Activated naive CD4-positive, alpha-beta T cell treated with anti-CD3 and anti-CD28 coated beads, Interleukin-2, amount 10 ng/mL, durations not matched to agents 7 days and 5 days (primary cell): ENCODE measurements at regions of chr20 and their contacts with region 1.

Region 1: GRCh38 chr20:57383447-57384347 is 7.5 kb upstream of the RBM38 start:
- DNase-seq: peak; percentile 17
- H3K4me3 Mint-ChIP-seq: no peak overlapping the region
- H3K27ac Mint-ChIP-seq: no peak overlapping the region
- H3K4me1 Mint-ChIP-seq: peaks cover 25% of the 10 kb centered on the region
- H3K27me3 Mint-ChIP-seq: no peaks in the 10 kb centered on the region

Region 2: GRCh38 chr20:57398231-57398821 is 14.6 kb after region 1 on chr20:
- CTCF ChIA-PET with region 1: interaction called, 17 read pairs
- DNase-seq: peak; percentile 95
- H3K4me3 Mint-ChIP-seq: peak overlapping the region; percentile 77
- H3K27ac Mint-ChIP-seq: peak overlapping the region; percentile 97
- H3K4me1 Mint-ChIP-seq: peaks cover 95% of the 10 kb centered on the region
- H3K27me3 Mint-ChIP-seq: no peaks in the 10 kb centered on the region

Region 3: DNA sequence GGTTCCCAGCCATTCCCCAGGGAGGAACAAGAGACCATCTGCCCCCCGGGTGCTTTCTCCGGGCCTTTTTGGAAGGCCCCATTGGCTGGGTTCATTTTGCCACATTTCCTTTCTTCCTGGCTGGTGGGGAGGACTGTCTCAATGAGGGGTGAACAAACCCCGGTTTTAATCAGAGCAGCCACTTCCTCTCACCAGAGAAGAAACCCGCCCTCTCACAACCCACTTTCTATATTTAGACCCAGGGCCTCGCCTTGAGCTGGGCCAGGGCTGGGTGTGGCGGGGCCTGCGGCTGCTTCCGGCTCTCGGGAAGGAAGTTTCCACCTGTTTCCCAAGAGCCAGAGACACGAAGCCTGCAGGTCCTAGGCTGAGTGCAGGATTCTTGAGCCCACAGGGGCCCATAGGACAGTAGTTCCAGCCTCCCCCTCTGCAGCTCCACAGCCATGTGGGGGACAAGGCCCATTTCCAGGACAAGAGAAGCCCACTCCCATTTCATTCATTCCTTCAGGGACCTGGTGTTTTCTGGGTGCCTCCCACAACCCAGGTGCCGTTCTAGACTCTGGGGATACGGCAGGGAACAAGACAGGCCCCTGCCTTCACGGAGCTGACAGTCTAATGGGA is 49.3 kb after region 1 on chr20:
- CTCF ChIA-PET with region 1: interaction called, 24 read pairs
- DNase-seq: peak; percentile 88
- H3K4me3 Mint-ChIP-seq: peak overlapping the region; percentile 53
- H3K27ac Mint-ChIP-seq: peak overlapping the region; percentile 96
- H3K4me1 Mint-ChIP-seq: peaks cover 74% of the 10 kb centered on the region
- H3K27me3 Mint-ChIP-seq: peaks cover 13% of the 10 kb centered on the region

Region 4: DNA sequence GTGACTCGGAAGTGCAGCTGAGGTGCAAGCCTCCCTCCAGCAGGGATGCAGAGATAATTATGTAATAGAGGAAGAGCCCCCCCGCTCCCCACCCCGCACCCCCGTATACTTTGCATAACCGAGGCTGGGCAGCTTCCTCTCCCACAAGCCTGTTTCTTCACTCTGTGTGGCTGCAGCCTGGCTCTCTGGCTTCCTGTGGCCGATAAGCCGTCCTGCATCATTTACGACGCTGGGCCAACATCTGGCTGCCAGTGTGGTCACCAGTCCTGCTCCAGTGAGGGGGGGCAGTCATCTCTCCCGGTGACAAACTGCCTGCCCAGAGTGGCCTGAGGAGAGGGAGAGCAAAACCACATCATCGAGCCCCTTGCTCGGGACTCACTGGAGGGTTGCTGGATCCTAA is 66.7 kb after region 1 on chr20:
- CTCF ChIA-PET with region 1: no interaction called
- DNase-seq: peak; percentile 46
- H3K4me3 Mint-ChIP-seq: no peak overlapping the region
- H3K27ac Mint-ChIP-seq: no peak overlapping the region
- H3K4me1 Mint-ChIP-seq: peaks cover 35% of the 10 kb centered on the region
- H3K27me3 Mint-ChIP-seq: peaks cover 71% of the 10 kb centered on the region

Region 5: DNA sequence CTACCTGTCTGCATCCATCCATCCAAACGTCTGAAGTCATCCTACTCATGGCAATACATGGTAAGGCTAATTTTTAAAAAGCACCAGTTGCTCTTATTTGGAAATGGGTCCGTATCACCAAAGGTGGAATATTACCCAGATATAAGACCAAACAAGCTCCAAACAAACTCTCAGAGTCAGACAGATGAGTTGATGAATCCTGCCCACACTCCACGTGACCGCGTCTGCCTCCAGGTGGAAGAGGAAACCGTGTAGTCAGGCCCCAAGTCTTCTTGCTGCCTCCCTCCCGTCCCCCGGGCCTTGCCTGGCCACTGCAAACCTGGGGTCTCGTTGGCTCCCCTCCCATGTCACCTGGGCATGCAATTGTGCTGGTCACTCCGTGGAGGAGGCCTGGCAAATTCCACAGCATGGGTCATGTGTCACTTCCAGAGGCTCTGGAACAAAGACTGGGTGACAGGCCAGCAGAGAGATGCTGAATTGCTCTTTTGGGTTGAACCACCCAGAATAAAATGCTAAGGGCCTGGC is 109.5 kb after region 1 on chr20:
- CTCF ChIA-PET with region 1: interaction called, 25 read pairs
- DNase-seq: no peak
- H3K4me3 Mint-ChIP-seq: no peak overlapping the region
- H3K27ac Mint-ChIP-seq: no peak overlapping the region
- H3K4me1 Mint-ChIP-seq: peaks cover 12% of the 10 kb centered on the region
- H3K27me3 Mint-ChIP-seq: peaks cover 43% of the 10 kb centered on the region

Region 6: GRCh38 chr20:57498425-57499400 is 115.0 kb after region 1 on chr20:
- CTCF ChIA-PET with region 1: interaction called, 25 read pairs
- DNase-seq: peak; percentile 58
- H3K4me3 Mint-ChIP-seq: no peak overlapping the region
- H3K27ac Mint-ChIP-seq: no peak overlapping the region
- H3K4me1 Mint-ChIP-seq: peaks cover 19% of the 10 kb centered on the region
- H3K27me3 Mint-ChIP-seq: peaks cover 73% of the 10 kb centered on the region